ENCODE measurements at regions of chr10 and their contacts with region 1.

Region 1: GRCh38 chr10:115795964-115796363 is 477.0 kb downstream of the GFRA1 start:
- DNase-seq: no peak
- H3K4me3 ChIP-seq: no peak overlapping the region
- H3K27ac ChIP-seq: no peak overlapping the region
- H3K4me1 ChIP-seq: no peaks in the 10 kb centered on the region
- H3K27me3 ChIP-seq: no peaks in the 10 kb centered on the region
- CTCF ChIP-seq: no peak

Region 2: GRCh38 chr10:115921795-115922194 is 125.8 kb after region 1 on chr10:
- CTCF ChIA-PET with region 1: interaction called, 11 read pairs
- dilution Hi-C with region 1: no loop called
- in situ Hi-C with region 1: no loop called
- intact Hi-C with region 1: no loop called
- DNase-seq: peak; percentile 79
- H3K4me3 ChIP-seq: no peak overlapping the region
- H3K27ac ChIP-seq: no peak overlapping the region
- H3K4me1 ChIP-seq: no peaks in the 10 kb centered on the region
- H3K27me3 ChIP-seq: no peaks in the 10 kb centered on the region
- CTCF ChIP-seq: no peak

Region 3: DNA sequence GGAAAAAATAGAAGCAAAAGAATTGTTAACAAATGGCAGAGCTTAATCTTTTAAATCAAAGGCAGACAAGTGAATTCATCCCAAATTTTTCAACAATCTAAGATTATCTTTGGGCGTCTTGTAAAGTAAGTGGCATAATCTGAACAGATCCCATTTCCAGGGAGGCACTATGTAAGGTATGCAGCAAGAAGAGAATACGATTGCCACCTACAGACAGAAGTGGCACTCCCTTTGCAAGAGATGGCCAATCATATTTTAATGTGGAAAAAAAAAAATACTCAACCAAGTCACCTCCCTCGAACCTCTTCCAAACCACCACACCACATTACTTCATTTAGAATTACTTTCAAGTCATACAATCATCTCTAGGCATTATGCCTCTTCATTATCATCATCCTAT is 473.0 kb after region 1 on chr10:
- CTCF ChIA-PET with region 1: no interaction called
- dilution Hi-C with region 1: no loop called
- in situ Hi-C with region 1: no loop called
- intact Hi-C with region 1: loop called (anchors 5 kb)
- DNase-seq: no peak
- H3K4me3 ChIP-seq: no peak overlapping the region
- H3K27ac ChIP-seq: no peak overlapping the region
- H3K4me1 ChIP-seq: peaks cover 24% of the 10 kb centered on the region
- H3K27me3 ChIP-seq: peaks cover 49% of the 10 kb centered on the region
- CTCF ChIP-seq: peak in 1 of 2 donors; percentile 30